ENCODE measurements at regions of chr10 and their contacts with region 1.

Region 1: DNA sequence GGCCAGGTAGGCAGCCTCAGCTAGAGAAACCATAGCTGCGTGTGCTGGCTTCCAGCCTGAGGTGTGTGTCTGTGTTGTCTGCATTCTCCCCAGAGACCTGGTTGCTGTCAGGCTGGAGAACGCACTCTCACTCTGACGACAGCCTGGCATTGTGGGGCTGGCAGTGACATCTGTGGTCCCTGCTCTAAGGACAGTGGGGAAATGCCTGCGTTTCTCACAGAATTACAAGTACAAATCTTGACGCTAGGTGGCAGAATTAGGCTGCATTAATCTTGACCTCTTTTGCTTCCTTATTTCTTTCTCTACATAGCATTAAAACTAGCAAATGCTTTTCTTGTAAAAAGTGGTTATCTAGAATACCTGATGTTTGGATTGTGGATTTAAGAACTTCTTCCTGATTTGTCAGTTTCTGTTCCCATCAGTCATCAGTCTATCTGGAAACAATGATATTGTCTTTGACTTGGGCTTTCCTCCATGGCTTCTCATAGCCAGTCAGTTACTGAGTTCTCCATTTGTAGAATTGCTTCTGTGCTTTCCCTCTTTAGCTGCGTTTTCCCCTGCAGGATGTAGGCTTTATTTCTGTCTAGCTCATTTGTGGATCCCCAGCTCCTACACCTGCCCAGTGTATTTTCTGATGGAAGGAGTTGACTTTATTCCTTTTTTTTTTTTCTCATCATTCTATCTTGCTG is 86.0 kb downstream of the FANK1 start:
- DNase-seq: no peak
- ATAC-seq: peak; percentile 48

Region 2: GRCh38 chr10:126277177-126277576 is 294.8 kb after region 1 on chr10:
- intact Hi-C with region 1: no loop called
- DNase-seq: no peak
- ATAC-seq: no peak

Region 3: DNA sequence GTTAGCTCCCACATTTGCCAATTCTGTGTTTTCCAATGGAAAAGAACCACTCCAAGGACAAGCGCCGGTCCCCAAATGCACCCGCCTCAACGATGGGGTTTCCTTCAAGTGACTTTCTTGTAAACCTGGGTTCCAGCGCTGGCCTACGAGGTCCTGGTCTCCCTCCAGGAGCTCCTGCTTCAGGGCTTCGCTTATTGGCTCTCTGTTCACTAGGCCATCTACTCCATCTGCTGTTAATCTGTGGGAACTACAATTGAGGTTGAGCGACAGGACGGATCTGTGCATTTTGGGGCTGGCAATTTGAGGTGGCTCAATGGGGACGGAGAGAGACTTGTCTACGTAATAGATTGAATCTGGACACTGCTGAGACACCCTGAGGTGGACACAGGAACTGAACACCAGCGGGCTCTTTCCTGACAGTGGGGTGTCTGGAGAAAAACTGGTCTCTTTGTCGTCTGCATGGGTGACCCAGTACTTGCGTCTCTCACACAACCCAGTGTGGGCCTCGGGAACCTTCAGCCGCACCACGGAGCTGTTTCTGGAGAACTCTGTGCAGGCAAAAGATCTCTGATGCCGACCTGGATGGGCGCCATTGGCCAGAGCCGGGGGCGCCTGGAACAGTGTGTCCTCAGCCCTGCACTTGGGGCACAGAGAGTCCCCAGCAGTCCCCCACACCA is 521.8 kb after region 1 on chr10:
- intact Hi-C with region 1: loop called (anchors 5 kb)
- DNase-seq: no peak
- ATAC-seq: peak; percentile 50

Region 4: GRCh38 chr10:126749015-126749655 is 766.7 kb after region 1 on chr10:
- intact Hi-C with region 1: loop called (anchors 5 kb)
- DNase-seq: peak; percentile 78
- ATAC-seq: peak; percentile 73

Measured in left ventricle myocardium superior (tissue), 1 donor.